Activated T-helper 2 cell treated with anti-CD3 and anti-CD28 coated beads, Interferon-gamma antibody, Interleukin-2, Interleukin-4, amounts not matched to agents 10 μg/mL and 5 μg/mL and 100 μg/mL, durations not matched to agents 14 hours and 24 hours and 36 hours (primary cell): ENCODE measurements at regions of chr1 and their contacts with region 1.

Region 1: DNA sequence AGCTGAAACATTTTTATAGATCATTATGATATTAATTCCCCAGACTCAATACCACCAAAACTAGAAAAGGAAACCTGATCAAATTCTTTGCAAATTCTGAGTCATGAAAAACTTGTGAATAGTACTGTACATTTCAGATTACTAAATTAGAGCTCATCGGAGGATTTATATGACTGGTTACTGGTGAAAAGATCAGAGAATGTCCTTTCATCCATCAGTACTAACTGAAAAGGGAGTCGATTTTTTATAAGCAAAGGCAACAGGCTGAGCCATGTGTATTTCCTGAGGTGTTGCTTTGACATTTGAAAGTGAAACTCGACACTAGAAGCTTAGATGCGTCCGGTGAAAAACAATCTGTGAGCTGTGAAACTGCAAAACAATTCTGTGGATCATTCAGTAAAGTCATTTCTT is 155.7 kb downstream of the TNFSF18 start:
- DNase-seq: peak; percentile 20
- H3K4me3 Mint-ChIP-seq: peak overlapping the region; percentile 59
- H3K27ac Mint-ChIP-seq: peak overlapping the region; percentile 0
- H3K4me1 Mint-ChIP-seq: peaks cover 39% of the 10 kb centered on the region
- H3K27me3 Mint-ChIP-seq: peaks cover 46% of the 10 kb centered on the region

Region 2: DNA sequence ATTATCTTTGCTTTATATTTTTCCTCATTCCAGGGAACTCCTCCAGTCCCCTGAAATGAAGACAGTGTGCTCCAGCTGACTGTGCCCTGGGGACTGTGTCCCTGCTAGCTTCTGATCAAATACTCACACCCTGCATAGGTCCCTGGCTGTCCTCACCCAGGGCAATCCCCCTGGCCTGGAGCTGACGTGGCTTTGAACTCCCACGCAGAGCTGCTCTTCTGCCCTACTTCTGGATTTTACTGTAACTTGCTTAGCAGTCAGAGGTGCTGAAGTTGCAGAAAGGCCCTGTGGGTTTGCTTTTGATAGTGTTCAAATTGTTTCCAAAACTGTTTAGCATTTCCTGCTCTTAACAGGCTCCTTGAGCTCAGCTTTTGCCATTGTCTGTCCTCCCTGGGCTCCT is 49.7 kb before region 1 on chr1:
- intact Hi-C with region 1: loop called (anchors 1 kb)
- DNase-seq: peak; percentile 22
- H3K4me3 Mint-ChIP-seq: no peak overlapping the region
- H3K27ac Mint-ChIP-seq: peak overlapping the region; percentile 53
- H3K4me1 Mint-ChIP-seq: peaks cover 18% of the 10 kb centered on the region
- H3K27me3 Mint-ChIP-seq: peaks cover 47% of the 10 kb centered on the region

Region 3: GRCh38 chr1:172940174-172940855 is 45.3 kb after region 1 on chr1:
- intact Hi-C with region 1: no loop called
- DNase-seq: no peak
- H3K4me3 Mint-ChIP-seq: no peak overlapping the region
- H3K27ac Mint-ChIP-seq: no peak overlapping the region
- H3K4me1 Mint-ChIP-seq: no peaks in the 10 kb centered on the region
- H3K27me3 Mint-ChIP-seq: peaks cover 29% of the 10 kb centered on the region

Region 4: GRCh38 chr1:173043253-173043652 is 148.2 kb after region 1 on chr1:
- intact Hi-C with region 1: no loop called
- DNase-seq: no peak
- H3K4me3 Mint-ChIP-seq: no peak overlapping the region
- H3K27ac Mint-ChIP-seq: no peak overlapping the region
- H3K4me1 Mint-ChIP-seq: peaks cover 18% of the 10 kb centered on the region
- H3K27me3 Mint-ChIP-seq: peaks cover 4% of the 10 kb centered on the region